Adrenal gland (tissue), 19 donors: ENCODE measurements at regions of chr1 and their contacts with region 1.

Region 1: GRCh38 chr1:54944610-54945544 is 35.6 kb upstream of the TMEM61 start:
- DNase-seq: peak; percentile 70 to 91 (median 86)
- H3K4me3 ChIP-seq: peak overlapping the region in 1 of 4 donors; percentile 21
- H3K27ac ChIP-seq: peak overlapping the region in 1 of 5 donors; percentile 64
- H3K4me1 ChIP-seq: peaks cover 0 to under 1% of the 10 kb centered on the region in 2 donors
- H3K27me3 ChIP-seq: no peaks in the 10 kb centered on the region
- CTCF ChIP-seq: peak; percentile 74 to 90 (median 78)
- POLR2A ChIP-seq: no peak

Region 2: GRCh38 chr1:54886724-54887664 is 57.9 kb before region 1 on chr1 and contains the start of gene DHCR24:
- intact Hi-C with region 1: loop called in 1 of 2 experiments (anchors 10 kb)
- DNase-seq: peak; percentile 87 to 93 (median 90)
- H3K4me3 ChIP-seq: peak within 1 kb of the TSS; percentile 57 to 84 (median 78)
- H3K27ac ChIP-seq: peak within 1 kb of the TSS; percentile 65 to 95 (median 81)
- H3K4me1 ChIP-seq: peaks cover 49 to 52% of the 10 kb centered on the region in 2 donors
- H3K27me3 ChIP-seq: no peaks in the 10 kb centered on the region
- CTCF ChIP-seq: no peak
- POLR2A ChIP-seq: peak; percentile 76 to 94
- total RNA-seq, gene DHCR24: 1,178 to 4,801 (median 3,190) TPM